ENCODE measurements at regions of chr12 and their contacts with region 1.

Region 1: DNA sequence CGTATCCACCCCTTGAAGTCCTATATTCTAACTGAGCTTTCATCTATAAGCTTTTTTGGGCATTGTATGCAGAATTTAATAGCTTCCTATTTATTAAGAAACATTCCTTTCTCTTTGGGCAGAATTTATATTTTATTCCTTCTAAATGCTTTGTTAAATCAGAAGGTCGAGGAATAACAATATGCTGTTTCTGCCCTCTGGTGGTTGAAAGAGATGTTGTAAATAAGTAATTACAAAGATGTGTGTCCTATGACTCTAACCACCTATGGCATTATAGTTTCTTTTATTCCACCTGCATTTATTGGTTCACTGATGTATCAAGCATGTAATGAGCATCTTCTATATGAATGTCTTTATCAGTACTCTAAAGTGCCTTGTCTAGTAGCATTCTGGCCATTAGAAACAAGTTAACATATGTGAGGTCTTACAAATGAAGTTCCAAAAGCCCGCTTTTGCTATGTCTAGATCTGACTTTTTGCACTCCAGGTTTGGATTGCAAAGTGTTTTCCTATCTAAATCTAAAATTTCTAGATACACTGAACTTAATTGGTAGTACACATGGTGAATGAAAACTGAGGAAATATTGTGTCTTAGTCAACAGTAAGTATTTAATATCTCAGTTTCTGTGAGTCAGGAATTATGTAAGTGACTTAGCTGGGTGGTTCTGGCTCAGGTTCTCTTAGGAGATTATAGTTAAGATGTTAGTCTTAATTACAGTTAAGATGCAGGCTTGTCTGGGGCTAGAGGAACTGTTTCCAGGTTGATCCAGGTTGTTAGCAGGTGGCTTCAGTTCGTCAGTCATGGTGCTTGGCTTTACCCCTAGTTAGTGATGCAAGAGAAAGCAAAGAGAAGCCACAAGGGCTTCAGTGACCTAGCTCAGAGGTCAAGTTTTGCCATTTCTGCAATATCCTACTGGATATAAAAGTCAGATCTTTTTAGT is 57.5 kb downstream of the PLEKHA5 start:
- H3K4me3 Mint-ChIP-seq: no peak overlapping the region
- H3K27ac Mint-ChIP-seq: no peak overlapping the region
- H3K4me1 Mint-ChIP-seq: peaks cover 40% of the 10 kb centered on the region
- H3K27me3 Mint-ChIP-seq: peaks cover 1% of the 10 kb centered on the region

Region 2: GRCh38 chr12:18139989-18140596 is 1046.9 kb before region 1 on chr12:
- intact Hi-C with region 1: loop called (anchors 10 kb)
- H3K4me3 Mint-ChIP-seq: no peak overlapping the region
- H3K27ac Mint-ChIP-seq: no peak overlapping the region
- H3K4me1 Mint-ChIP-seq: peaks cover 5% of the 10 kb centered on the region
- H3K27me3 Mint-ChIP-seq: no peaks in the 10 kb centered on the region

Region 3: DNA sequence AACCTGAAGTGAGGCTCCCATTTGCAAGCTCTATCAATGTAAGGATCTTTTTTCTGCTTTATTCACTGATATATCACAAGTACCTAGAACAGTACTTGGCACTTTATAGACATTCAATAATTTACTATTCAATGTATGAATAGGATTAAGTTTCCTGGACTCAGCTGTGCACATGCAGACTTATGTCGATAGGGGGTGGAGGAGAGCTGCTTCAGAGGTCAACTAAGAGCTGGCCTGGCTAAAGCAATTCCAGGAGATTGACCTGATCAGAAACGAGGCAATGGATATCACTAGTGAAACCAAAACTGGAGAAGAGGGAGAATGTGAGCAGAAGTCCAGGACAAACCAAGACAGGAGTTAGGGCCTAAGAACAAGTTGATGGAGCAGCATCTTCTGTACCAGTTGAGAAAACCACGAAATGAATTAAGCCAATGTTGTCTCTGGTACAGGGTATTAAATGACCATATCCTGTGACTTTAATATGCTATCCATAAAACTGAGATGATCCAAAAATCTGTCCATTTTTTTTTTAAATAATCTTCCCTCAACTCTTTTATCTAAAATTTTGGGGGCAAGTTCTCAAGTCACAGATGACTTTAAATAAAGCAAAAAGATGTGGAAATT is 756.5 kb before region 1 on chr12:
- intact Hi-C with region 1: loop called (anchors 5 kb)
- H3K4me3 Mint-ChIP-seq: no peak overlapping the region
- H3K27ac Mint-ChIP-seq: no peak overlapping the region
- H3K4me1 Mint-ChIP-seq: no peaks in the 10 kb centered on the region
- H3K27me3 Mint-ChIP-seq: no peaks in the 10 kb centered on the region

Region 4: DNA sequence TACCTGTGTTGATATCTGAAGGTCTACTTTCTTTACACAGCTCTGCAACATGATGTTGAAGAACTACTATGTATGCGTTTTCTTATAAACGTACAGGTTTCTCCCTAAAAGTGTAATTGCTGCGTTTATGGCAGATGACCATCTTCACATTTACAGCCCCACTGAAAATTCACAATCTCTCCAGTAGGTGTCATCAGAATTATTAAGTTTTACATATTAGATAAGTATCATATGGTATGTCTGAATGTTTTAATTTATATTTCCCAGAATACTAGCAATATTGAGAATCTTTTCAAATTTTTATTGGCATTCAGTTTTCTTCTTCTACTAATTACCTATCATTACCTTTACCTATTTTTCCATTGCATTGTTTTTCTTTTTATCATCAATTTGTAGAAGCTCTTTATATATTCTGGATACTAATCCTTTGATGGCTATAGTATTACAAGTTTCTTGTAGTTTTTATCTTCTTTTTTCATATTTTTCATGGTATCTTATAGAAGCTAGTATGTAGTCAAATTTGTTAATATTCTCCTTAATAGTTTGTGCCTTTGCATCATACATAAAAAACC is 325.6 kb before region 1 on chr12:
- intact Hi-C with region 1: loop called (anchors 5 kb)
- H3K4me3 Mint-ChIP-seq: no peak overlapping the region
- H3K27ac Mint-ChIP-seq: no peak overlapping the region
- H3K4me1 Mint-ChIP-seq: no peaks in the 10 kb centered on the region
- H3K27me3 Mint-ChIP-seq: no peaks in the 10 kb centered on the region

Region 5: DNA sequence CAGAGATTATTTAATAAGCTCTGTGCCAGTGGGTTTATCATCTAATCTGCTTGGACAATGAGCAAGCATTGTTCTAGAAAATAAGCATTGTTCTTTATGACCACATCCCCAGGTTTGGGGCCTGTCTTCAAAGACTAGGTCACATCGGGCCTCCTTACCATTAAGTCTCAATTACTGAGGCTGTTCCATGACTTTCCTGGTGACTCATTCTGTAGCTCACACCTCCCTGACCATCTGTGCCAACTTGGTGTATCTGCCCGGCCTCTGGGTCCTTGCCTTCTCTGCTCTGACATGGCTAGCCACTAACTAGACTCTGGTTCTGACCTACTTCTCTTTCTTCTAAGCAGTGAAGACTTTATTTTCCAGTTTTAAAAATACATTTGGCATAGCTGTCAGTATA is 101.9 kb before region 1 on chr12:
- intact Hi-C with region 1: no loop called
- H3K4me3 Mint-ChIP-seq: no peak overlapping the region
- H3K27ac Mint-ChIP-seq: no peak overlapping the region
- H3K4me1 Mint-ChIP-seq: no peaks in the 10 kb centered on the region
- H3K27me3 Mint-ChIP-seq: no peaks in the 10 kb centered on the region

Region 6: GRCh38 chr12:19236656-19237055 is 49.7 kb after region 1 on chr12:
- intact Hi-C with region 1: loop called (anchors 5 kb)
- H3K4me3 Mint-ChIP-seq: peak overlapping the region; percentile 6
- H3K27ac Mint-ChIP-seq: no peak overlapping the region
- H3K4me1 Mint-ChIP-seq: peaks cover 60% of the 10 kb centered on the region
- H3K27me3 Mint-ChIP-seq: no peaks in the 10 kb centered on the region

Measured in dendritic cell treated with granulocyte-macrophage colony-stimulating factor and Interleukin-4, amounts not matched to agents 40 ng/mL and 50 ng/mL, for 4 days (primary cell).